Activated T-helper 2 cell treated with anti-CD3 and anti-CD28 coated beads, Interferon-gamma antibody, Interleukin-2, Interleukin-4, amounts not matched to agents 10 μg/mL and 5 μg/mL and 100 μg/mL, durations not matched to agents 14 hours and 24 hours and 36 hours (primary cell): ENCODE measurements at regions of chr4 and their contacts with region 1.

Region 1: DNA sequence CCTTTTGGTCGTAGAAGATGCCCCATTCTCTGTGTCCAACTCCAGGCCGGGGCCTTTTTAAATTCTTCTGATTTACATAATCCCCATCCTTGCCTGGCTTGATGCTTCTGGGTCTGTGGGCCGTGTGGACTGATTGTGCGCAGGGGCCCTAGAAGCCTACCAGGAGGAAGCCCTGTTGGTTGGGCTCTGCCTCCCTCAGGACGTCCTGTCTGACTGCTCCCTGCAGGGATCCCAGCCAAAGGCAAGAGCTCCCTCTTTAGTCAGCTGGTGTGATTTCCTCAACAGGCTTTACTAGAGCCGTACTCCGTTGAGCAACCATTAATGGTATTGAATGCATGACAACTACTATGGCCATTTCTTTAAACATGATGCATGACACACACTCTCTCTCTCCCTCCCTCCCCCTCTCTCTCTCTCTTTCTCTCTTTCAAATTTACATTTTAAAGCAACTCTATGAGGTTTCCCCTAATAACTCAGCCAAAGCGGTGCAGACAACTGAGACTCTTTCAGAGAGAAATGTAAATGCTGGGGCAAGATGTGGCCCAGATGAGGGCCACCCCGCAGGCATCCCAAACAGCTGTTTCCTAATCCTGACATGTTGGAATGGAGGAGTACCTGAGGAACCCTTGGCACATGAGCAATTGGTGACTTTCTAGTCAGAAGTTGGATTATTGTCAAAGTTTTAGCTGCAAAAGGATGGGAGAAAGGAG is 117.3 kb downstream of the DRD5 start:
- DNase-seq: no peak
- H3K4me3 Mint-ChIP-seq: no peak overlapping the region
- H3K27ac Mint-ChIP-seq: no peak overlapping the region
- H3K4me1 Mint-ChIP-seq: peaks cover 3% of the 10 kb centered on the region
- H3K27me3 Mint-ChIP-seq: peaks cover 7% of the 10 kb centered on the region

Region 2: DNA sequence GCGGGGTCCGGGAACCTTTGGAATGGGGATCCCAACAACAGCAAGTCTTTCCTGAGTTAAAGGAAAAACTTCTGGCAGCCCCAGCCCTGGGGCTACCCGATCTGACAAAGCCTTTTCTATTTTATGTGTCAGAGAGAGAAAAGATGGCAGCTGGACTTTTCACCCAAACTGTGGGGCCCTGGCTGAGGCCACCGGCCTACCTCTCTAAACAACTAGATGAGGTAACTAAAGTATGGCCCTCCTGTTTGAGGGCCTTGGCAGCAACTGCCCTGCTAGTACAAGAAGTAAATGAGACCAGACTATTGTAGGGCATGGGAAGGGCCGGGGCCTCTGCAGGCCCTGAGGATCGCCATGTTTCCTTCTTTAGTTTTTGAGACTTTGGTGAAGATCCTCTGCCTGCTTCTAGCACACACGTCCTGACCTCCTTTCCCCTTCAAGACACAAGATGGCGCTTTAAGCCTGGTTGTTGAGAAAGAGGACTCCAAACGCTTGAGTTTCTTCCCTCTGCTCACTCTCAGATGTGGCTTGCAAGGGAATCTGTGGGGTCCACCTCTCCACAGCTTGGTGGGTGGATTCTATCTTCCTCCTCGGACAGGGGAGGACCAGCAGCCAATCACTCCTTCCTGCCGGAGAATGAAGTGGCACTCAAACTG is 135.8 kb before region 1 on chr4:
- intact Hi-C with region 1: loop called (anchors 10 kb)
- DNase-seq: peak; percentile 40
- H3K4me3 Mint-ChIP-seq: no peak overlapping the region
- H3K27ac Mint-ChIP-seq: no peak overlapping the region
- H3K4me1 Mint-ChIP-seq: no peaks in the 10 kb centered on the region
- H3K27me3 Mint-ChIP-seq: peaks cover 12% of the 10 kb centered on the region